Heart right ventricle (tissue), 16 donors: ENCODE measurements at regions of chr12 and their contacts with region 1.

Region 1: GRCh38 chr12:124745891-124746570 is 117.6 kb downstream of the SCARB1 start:
- DNase-seq: peak; percentile 92 to 95
- ATAC-seq: peak; percentile 95 to 97 (median 96)
- H3K4me3 ChIP-seq: peak overlapping the region in 5 of 10 donors; percentile 4 to 24 (median 7)
- H3K27ac ChIP-seq: peak overlapping the region; percentile 59 to 91 (median 88)
- H3K4me1 ChIP-seq: peaks cover 6 to 42% (median 22%) of the 10 kb centered on the region in 9 donors
- H3K27me3 ChIP-seq: no peaks in the 10 kb centered on the region
- CTCF ChIP-seq: no peak

Region 2: DNA sequence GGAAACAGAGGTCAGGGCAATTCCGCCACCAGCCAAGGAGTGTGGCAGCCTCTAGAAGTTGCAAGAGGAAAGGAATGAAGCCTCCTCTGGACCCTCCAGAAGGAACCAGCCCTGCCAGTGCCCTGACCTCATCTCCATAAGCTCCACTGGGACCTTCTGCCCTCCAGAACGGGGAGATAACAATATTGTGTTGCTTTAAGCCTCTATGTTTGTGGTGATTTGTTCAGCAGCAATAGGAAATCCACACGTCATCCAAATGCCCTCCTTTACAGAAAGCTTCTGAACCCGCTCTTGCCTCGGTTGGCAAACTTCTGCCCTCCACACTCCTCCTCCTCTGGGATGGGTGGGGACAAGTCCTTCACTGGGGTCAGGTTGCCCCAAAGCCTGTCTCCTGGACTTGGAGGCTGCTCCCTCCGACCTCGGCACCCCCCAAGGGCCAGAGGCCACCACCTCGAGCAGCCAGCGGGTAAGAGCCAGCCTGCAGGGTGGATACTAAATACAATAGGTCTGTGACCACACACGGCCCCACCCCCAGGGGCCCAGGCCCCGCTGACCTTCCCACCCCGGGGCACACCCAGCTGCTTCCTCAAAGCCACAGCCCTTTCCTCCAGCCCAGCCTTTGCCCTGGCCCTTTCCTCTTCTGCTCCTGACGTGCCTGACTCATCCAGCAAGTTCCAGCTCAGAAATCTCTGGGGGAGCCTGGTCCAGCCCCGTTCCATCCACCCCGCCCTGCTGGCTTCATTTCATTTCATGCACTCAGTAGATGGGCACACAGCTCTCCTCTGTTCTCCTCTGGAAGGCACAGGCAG is 120.0 kb before region 1 on chr12:
- intact Hi-C with region 1: loop called in 1 of 10 experiments (anchors 5 kb)
- DNase-seq: peak; percentile 91
- ATAC-seq: peak; percentile 84 to 97 (median 92)
- H3K4me3 ChIP-seq: peak overlapping the region in 1 of 10 donors; percentile 24
- H3K27ac ChIP-seq: peak overlapping the region; percentile 65 to 95 (median 83)
- H3K4me1 ChIP-seq: peaks cover 13 to 64% (median 41%) of the 10 kb centered on the region in 9 donors
- H3K27me3 ChIP-seq: no peaks in the 10 kb centered on the region
- CTCF ChIP-seq: no peak

Region 3: GRCh38 chr12:124700810-124701592 is 45.0 kb before region 1 on chr12:
- intact Hi-C with region 1: loop called in 3 of 10 experiments (anchors 5 kb)
- DNase-seq: no peak
- ATAC-seq: peak; percentile 31 to 72 (median 60)
- H3K4me3 ChIP-seq: no peak overlapping the region
- H3K27ac ChIP-seq: peak overlapping the region in 8 of 10 donors; percentile 6 to 85 (median 80)
- H3K4me1 ChIP-seq: peaks cover 8 to 53% (median 25%) of the 10 kb centered on the region in 9 donors
- H3K27me3 ChIP-seq: no peaks in the 10 kb centered on the region
- CTCF ChIP-seq: no peak